RWPE1 (cell line): ENCODE measurements at regions of chr4 and their contacts with region 1.

Region 1: GRCh38 chr4:6720202-6720699 is 4.3 kb downstream of the BLOC1S4 start:
- DNase-seq: peak; percentile 83
- H3K27ac ChIP-seq: peak overlapping the region; percentile 36
- CTCF ChIP-seq: peak; percentile 90

Region 2: GRCh38 chr4:6332042-6332668 is 388.1 kb before region 1 on chr4:
- CTCF ChIA-PET with region 1: no interaction called
- POLR2A ChIA-PET with region 1: no interaction called
- DNase-seq: peak; percentile 27
- H3K27ac ChIP-seq: no peak overlapping the region
- CTCF ChIP-seq: peak; percentile 70

Region 3: GRCh38 chr4:6815029-6815836 is 95.0 kb after region 1 on chr4:
- CTCF ChIA-PET with region 1: no interaction called
- POLR2A ChIA-PET with region 1: no interaction called
- DNase-seq: no peak
- H3K27ac ChIP-seq: no peak overlapping the region
- CTCF ChIP-seq: no peak

Region 4: GRCh38 chr4:6873792-6874461 is 153.7 kb after region 1 on chr4:
- CTCF ChIA-PET with region 1: interaction called, 20 read pairs
- POLR2A ChIA-PET with region 1: no interaction called
- DNase-seq: peak; percentile 12
- H3K27ac ChIP-seq: no peak overlapping the region
- CTCF ChIP-seq: peak; percentile 78